ENCODE measurements at regions of chr4 and their contacts with region 1.

Region 1: DNA sequence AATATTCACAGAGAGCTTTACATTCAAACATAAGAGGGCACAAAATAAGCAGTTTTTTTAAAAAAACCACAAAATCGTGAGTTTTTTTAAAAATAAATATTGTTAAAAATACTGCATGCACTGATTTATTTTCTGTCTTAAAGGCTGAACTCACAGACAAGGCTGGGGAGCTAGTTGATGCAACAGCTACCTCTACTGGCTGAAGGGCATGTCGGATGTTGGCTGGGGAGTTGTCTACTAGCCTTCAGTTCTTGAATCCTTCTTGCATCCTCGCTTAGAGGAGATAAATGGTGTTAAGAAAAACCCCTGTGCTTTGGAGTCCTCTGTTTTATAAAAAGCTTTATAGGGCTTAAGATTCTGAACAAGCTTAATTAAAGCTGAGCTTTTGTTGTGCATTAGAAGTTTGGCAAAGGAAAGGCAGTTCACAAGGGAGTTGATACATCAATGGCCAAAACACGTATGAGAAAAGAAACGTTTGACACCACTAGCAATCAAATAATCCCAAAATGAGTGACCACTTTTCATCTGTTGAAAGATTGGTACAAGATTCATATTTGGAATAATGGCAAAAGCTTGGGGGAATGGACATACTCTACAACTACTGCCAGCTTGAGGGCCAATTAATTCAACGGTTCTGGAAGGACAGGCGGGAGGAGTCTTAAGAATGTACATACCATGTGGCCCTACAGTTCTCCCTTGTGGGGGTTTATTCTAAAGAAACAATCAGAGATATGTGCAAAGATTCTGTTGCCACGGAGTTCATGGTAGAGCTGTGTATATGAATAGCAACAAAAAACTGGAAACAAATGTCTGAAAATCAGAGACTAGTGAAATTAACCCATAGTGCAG is 94.7 kb downstream of the SEL1L3 start:
- DNase-seq: peak; percentile 28 to 89 (median 72)

Region 2: GRCh38 chr4:25439918-25440477 is 328.1 kb before region 1 on chr4:
- intact Hi-C with region 1: loop called (anchors 2 kb)
- DNase-seq: peak in 38 of 42 donors; percentile 15 to 92 (median 72)

Region 3: DNA sequence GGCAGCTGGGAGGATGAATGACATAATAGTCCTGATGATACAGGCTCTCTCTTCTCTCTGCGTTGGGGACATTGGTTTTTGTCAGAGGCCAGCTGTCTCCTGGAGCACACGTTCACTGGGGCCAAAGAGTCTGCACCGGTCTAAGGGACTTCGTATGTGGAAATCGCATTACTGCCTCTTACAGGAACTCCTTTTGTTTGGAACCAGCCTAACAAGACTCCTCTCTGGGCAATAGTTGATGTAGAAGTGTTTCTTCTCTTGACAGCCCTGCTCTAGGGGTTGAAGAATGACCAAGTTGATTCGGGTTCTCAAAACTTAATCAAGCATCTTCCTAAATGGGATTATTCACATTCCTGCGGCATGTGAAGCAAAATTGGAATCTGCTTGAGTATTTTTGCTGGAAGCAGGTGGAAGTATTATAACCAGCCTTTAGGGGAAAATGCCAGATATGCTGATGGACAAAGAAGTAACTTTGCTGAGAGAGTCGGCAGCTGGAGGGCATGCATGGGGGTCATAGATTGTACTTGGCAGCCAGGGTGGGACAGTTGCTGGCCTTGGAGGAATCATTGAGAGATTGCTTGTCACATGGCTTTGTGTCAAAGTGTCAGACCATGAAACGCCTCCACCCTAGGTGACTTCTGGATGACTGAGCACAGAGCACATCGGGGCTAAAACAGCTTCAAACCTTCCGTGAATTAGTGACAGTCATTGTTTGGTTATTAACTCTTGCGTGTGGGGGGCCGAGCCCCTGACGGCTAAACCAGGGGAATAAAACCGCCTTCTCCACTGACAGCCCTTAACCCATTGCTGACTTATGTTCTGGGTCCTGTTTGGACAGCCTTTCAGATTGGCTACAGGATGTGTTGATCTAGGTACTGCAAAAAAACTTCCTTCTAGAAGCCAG is 146.8 kb before region 1 on chr4:
- intact Hi-C with region 1: no loop called
- DNase-seq: no peak

Measured in head of caudate nucleus (tissue), 42 donors.